Psoas muscle (tissue), 8 donors: ENCODE measurements at regions of chr10 and their contacts with region 1.

Region 1: DNA sequence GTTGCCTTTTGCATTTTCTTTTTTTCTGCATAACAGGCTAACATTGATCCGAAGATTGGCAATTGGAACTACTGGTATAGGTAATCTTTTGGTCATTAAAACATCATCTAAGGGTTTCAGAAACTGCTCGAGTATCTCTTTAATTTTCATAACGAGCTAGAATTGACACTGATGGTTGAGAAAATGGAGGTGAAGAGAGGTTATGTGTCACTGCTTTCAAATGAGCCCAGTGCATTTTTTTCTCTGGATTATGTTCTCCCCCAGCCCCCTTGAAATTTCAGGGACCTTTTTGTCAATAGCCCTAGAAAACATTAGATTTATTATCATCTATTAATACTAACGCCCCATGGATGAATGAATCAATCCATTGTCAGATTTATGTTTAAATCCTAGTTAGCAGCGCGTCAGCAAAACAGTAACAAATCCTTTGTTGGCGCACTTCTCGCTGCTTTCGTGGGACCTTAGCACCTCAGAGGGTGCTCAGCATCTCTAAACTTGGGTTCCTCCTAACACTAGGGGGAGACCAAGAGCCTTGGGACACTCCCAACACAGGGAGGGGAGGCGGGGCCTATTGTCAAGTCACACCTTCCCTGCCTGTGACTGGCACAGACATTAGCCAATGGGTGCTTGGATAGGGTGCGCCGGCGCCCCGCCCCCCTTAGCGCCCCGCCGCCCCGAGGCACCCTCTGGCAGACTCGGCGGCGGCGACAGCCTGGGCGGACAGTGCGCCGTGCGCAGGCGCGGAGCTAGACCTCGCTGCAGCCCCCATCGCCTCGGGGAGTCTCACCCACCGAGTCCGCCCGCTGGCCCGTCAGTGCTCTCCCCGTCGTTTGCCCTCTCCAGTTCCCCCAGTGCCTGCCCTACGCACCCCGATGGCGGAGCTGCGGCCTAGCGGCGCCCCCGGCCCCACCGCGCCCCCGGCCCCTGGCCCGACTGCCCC is at the start of gene SUFU:
- DNase-seq: peak; percentile 97 to 98
- ATAC-seq: peak; percentile 75 to 82 (median 81)
- H3K4me3 ChIP-seq: peak within 1 kb of the TSS; percentile 94
- H3K27ac ChIP-seq: peak within 1 kb of the TSS; percentile 75
- H3K4me1 ChIP-seq: peaks cover 50% of the 10 kb centered on the region
- H3K27me3 ChIP-seq: no peaks in the 10 kb centered on the region
- CTCF ChIP-seq: peak; percentile 93
- total RNA-seq, gene SUFU: 4.8 to 6.8 (median 5.5) TPM

Region 2: DNA sequence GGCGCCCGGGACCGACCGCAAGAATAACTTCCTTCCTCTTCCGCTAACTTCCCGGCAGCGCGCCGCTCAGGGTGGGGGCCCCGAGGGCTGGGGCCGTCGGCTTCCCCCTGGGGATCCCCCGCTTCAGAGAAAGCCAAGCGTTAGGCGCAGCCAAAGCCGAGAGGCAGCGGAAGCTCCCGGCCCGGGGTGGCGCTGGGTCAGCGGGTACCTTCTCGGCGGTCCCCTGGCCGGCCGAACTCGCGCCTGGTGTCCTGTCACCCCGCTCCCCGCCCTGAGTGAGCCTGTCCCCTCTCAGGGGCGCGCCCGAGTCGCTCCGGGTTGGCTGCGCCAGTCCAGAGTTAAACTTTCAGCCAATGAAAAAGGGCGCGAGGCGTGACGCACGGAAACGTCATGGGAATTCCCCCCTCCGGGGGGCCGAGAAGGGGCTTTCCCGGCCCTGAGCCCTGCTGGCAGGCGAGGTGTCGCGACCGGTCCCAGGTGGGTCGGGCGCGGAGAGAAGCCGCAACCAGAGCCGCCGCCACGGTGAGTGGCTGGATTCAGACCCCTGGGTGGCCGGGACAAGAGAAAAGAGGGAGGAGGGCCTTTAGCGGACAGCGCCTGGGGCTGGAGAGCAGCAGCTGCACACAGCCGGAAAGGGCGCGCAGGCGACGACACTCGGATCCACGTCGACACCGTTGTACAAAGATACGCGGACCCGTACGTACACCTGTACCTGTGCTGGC is 109.3 kb before region 1 on chr10:
- intact Hi-C with region 1: no loop called
- DNase-seq: peak; percentile 95 to 96
- ATAC-seq: peak; percentile 87 to 90 (median 90)
- H3K4me3 ChIP-seq: peak overlapping the region; percentile 75
- H3K27ac ChIP-seq: peak overlapping the region; percentile 97
- H3K4me1 ChIP-seq: peaks cover 23% of the 10 kb centered on the region
- H3K27me3 ChIP-seq: no peaks in the 10 kb centered on the region
- CTCF ChIP-seq: no peak

Region 3: GRCh38 chr10:102420810-102421644 is 82.5 kb before region 1 on chr10 and contains the start of gene FBXL15:
- intact Hi-C with region 1: no loop called
- DNase-seq: peak; percentile 95 to 98
- ATAC-seq: peak; percentile 89 to 91 (median 90)
- H3K4me3 ChIP-seq: peak within 1 kb of the TSS; percentile 98
- H3K27ac ChIP-seq: peak within 1 kb of the TSS; percentile 87
- H3K4me1 ChIP-seq: peaks cover 20% of the 10 kb centered on the region
- H3K27me3 ChIP-seq: peaks cover 0 to 23% (median 2%) of the 10 kb centered on the region in 3 donors
- CTCF ChIP-seq: no peak
- total RNA-seq, gene FBXL15: 7.9 to 13.3 (median 9.5) TPM

Region 4: DNA sequence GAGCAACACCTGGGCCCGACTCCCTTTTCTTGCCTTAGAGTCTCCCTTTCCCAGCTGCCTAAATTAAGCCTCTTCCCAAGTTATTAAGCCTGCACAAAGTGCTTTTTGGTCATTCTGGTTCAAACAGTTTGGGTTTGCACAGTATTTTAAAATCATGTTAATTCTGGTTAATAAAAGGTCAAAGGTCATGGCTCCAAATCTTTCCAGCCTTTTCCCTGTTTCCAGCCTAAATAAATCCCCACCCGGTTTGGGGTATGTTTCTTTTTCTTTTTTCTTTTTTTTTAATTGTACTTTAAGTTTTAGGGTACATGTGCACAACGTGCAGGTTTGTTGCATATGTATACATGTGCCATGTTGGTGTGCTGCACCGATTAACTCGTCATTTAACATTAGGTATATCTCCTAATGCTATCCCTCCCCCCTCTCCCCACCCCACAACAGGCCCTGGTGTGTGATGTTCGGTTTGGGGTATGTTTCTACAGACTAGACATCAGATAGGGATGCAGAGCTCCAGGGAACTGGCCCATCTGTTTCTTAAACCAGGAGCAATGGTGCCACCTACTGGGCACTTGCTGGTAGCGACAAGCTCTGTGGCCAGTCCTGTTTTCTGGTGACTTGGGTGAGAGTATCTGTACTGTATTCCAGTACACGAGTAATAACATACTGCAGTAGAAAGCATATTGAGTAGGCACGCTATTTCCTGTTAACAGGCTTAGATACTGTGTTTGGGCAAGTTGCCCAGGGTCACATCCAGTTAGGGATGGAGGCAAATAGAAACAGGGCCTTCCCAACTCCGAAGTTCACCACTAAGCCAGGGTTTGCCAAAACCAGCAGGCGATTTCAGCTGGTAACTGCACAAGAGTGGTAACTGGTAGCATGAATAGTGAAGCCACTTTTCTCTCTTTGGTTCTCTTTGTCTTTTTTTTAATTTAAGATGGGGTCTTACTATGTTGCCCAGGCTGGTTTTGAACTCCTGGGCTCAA is 80.2 kb after region 1 on chr10:
- intact Hi-C with region 1: loop called (anchors 2 kb)
- DNase-seq: peak; percentile 79 to 89
- ATAC-seq: peak; percentile 96 to 98 (median 96)
- H3K4me3 ChIP-seq: no peak overlapping the region
- H3K27ac ChIP-seq: peak overlapping the region; percentile 28
- H3K4me1 ChIP-seq: peaks cover 9% of the 10 kb centered on the region
- H3K27me3 ChIP-seq: no peaks in the 10 kb centered on the region
- CTCF ChIP-seq: peak; percentile 89

Region 5: DNA sequence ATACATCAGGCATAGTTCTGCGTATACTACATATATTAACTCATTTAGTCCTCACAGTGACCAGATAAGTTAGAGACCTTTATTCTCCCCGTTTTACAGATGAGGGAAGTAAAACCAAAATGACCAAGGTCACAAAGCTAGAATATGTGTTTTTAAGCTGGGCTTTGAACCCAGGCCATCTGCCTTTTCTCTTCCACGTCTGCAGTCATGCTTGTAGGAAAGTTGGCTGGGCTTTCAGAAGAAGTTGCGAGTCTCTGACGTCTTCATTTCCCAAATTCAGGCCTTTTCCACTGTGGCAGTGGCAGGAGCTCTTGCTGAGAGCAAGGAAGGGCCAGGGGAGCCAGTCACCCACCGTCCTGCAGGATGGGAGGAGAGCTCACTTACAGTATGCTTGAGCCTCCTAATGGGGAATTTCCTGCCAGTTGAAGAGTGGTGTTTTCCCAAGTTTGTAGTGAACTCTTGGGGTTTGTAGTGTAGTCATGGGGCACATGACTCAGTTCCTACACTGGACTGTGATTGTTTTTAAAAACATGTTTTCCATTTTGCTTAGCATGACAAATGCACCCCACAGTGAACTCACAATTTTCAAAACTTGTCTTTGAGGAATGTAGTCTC is 299.5 kb after region 1 on chr10:
- intact Hi-C with region 1: no loop called
- DNase-seq: peak; percentile 49 to 66
- ATAC-seq: no peak
- H3K4me3 ChIP-seq: no peak overlapping the region
- H3K27ac ChIP-seq: peak overlapping the region; percentile 64
- H3K4me1 ChIP-seq: peaks cover 65% of the 10 kb centered on the region
- H3K27me3 ChIP-seq: no peaks in the 10 kb centered on the region
- CTCF ChIP-seq: no peak